ENCODE measurements at regions of chrX and their contacts with region 1.

Region 1: GRCh38 chrX:49291615-49292337 is 11.7 kb upstream of the GAGE10 start:
- DNase-seq: peak; percentile 67
- H3K4me3 ChIP-seq: no peak overlapping the region
- H3K27ac ChIP-seq: no peak overlapping the region
- H3K4me1 ChIP-seq: no peaks in the 10 kb centered on the region
- H3K27me3 ChIP-seq: no peaks in the 10 kb centered on the region
- CTCF ChIP-seq: peak; percentile 63

Region 2: GRCh38 chrX:49754233-49754857 is 462.6 kb after region 1 on chrX:
- intact Hi-C with region 1: loop called (anchors 5 kb)
- DNase-seq: peak; percentile 27
- H3K4me3 ChIP-seq: no peak overlapping the region
- H3K27ac ChIP-seq: no peak overlapping the region
- H3K4me1 ChIP-seq: no peaks in the 10 kb centered on the region
- H3K27me3 ChIP-seq: peaks cover 15% of the 10 kb centered on the region
- CTCF ChIP-seq: peak; percentile 77

Measured in colonic mucosa (tissue), 4 donors.